ENCODE measurements at regions of chr15 and their contacts with region 1.

Region 1: DNA sequence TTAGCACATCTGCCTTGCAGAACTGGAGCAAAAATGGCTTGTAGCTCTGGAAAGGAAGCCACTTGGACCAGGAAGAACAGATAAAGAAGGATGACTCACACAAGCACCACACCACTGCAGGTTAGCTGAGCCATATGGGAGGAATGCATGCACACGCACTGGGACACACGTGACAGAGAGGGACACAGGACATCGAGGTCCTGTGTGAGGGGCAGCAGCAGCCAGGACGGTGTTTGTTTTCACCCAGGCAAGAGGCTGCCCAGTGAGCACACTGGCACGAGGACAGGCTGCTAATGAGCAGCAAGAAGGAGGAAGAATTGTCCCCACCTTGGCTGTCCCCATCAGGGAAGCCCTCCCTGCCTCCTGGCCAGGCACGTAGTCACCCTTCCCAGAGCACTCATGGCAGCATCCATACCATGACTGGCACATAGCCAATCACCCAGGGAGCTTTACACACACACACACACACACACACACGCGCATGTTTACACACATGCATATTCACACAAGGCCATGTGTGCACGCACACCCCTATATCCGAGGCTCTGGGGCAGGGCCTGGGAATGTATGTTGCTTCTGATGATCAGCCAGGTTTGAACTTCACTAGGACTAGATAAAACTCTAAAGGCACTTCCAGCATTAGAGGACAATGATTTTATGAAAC is 24.0 kb upstream of the SPTBN5 start:
- DNase-seq: peak; percentile 71
- H3K4me3 ChIP-seq: no peak overlapping the region
- H3K27ac ChIP-seq: peak overlapping the region; percentile 0
- H3K4me1 ChIP-seq: peaks cover 48% of the 10 kb centered on the region
- H3K27me3 ChIP-seq: no peaks in the 10 kb centered on the region
- CTCF ChIP-seq: no peak
- POLR2A ChIP-seq: no peak

Region 2: GRCh38 chr15:41727143-41727542 is 190.8 kb before region 1 on chr15:
- CTCF ChIA-PET with region 1: no interaction called
- POLR2A ChIA-PET with region 1: no interaction called
- dilution Hi-C with region 1: no loop called
- intact Hi-C with region 1: no loop called
- DNase-seq: no peak
- H3K4me3 ChIP-seq: no peak overlapping the region
- H3K27ac ChIP-seq: no peak overlapping the region
- H3K4me1 ChIP-seq: no peaks in the 10 kb centered on the region
- H3K27me3 ChIP-seq: no peaks in the 10 kb centered on the region
- CTCF ChIP-seq: no peak
- POLR2A ChIP-seq: no peak

Region 3: DNA sequence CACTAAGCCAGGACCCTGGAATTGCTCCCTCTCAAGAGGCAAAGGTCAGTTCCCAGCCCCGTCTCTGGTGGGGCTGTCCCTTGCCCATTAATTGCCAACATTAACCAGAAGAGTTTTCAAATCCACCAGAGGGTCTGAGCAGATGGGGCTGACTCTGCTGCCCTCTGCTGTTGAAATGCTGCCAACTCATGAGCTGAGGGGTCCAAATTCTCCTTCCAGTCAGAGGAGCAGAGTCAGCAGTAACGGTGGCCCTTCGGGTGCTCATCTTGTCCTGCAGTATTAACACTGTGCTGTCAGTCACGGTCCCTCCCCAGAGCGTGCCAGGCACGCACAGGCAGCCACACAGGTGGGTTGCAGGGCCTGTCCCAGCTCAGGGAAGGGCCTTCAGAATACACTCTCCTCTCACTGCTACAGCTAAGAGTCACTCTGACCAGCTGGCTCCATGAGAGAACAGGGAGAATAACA is 13.3 kb before region 1 on chr15:
- CTCF ChIA-PET with region 1: interaction called, 18 read pairs
- POLR2A ChIA-PET with region 1: no interaction called
- dilution Hi-C with region 1: no loop called
- intact Hi-C with region 1: no loop called
- DNase-seq: peak; percentile 75
- H3K4me3 ChIP-seq: no peak overlapping the region
- H3K27ac ChIP-seq: no peak overlapping the region
- H3K4me1 ChIP-seq: no peaks in the 10 kb centered on the region
- H3K27me3 ChIP-seq: no peaks in the 10 kb centered on the region
- CTCF ChIP-seq: peak; percentile 85
- POLR2A ChIP-seq: no peak

Region 4: GRCh38 chr15:41936649-41937567 is 19.0 kb after region 1 on chr15:
- CTCF ChIA-PET with region 1: interaction called, 4 read pairs
- POLR2A ChIA-PET with region 1: interaction called, 3 read pairs
- dilution Hi-C with region 1: no loop called
- intact Hi-C with region 1: loop called (anchors 1 kb)
- DNase-seq: peak; percentile 97
- H3K4me3 ChIP-seq: no peak overlapping the region
- H3K27ac ChIP-seq: peak overlapping the region; percentile 99
- H3K4me1 ChIP-seq: peaks cover 96% of the 10 kb centered on the region
- H3K27me3 ChIP-seq: no peaks in the 10 kb centered on the region
- CTCF ChIP-seq: no peak
- POLR2A ChIP-seq: peak; percentile 85

Region 5: GRCh38 chr15:42056934-42057779 is 139.3 kb after region 1 on chr15:
- CTCF ChIA-PET with region 1: no interaction called
- POLR2A ChIA-PET with region 1: no interaction called
- dilution Hi-C with region 1: no loop called
- intact Hi-C with region 1: loop called (anchors 10 kb)
- DNase-seq: peak; percentile 84
- H3K4me3 ChIP-seq: peak overlapping the region in 1 of 3 experiments; percentile 3
- H3K27ac ChIP-seq: no peak overlapping the region
- H3K4me1 ChIP-seq: peaks cover 4% of the 10 kb centered on the region
- H3K27me3 ChIP-seq: peaks cover 2 to 7% of the 10 kb centered on the region in 2 experiments
- CTCF ChIP-seq: peak; percentile 81 to 85
- POLR2A ChIP-seq: no peak